ENCODE measurements at regions of chr7 and their contacts with region 1.

Region 1: GRCh38 chr7:51455948-51456347 is 139.3 kb upstream of the COBL start:
- DNase-seq: no peak
- H3K4me3 ChIP-seq: no peak overlapping the region
- H3K27ac ChIP-seq: no peak overlapping the region
- H3K4me1 ChIP-seq: peaks cover 0 to 14% (median 7%) of the 10 kb centered on the region in 4 experiments; a peak in 5 of 7 replicates
- H3K27me3 ChIP-seq: peaks cover 0 to 9% (median 6%) of the 10 kb centered on the region in 4 experiments; a peak in 2 of 7 replicates
- CTCF ChIP-seq: peak in 1 of 3 experiments; percentile 7; a peak in 2 of 4 replicates
- EP300 ChIP-seq: no peak
- POLR2A ChIP-seq: no peak
- RAD21 ChIP-seq: peak; percentile 25 to 38

Region 2: DNA sequence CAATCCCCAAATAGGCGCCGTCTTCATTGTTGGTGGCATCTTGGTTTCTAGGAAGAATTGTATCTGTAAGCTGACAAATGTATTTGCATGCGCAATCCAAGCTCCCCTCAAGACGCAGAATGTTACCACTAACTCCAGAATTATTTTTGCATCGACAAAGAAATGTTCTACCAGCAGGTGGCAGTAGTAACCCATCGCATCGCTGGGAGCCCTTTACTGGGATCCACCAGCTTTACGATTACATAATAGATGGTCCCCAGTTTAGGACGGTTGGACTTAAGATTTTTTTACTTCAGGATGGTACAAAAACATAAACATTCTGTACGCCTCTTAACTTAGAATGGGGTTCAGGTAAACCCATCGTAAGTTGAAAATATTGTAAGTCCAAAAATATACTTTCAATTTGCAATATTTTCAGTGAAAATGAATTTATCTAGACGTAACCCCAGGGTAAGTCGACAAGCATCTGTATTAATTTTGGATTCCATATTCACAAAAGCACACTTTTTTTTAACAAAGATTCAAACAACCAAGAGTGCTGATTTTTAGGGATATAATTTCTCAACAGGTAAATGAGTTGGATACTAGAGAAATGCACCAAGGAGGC is 25.4 kb before region 1 on chr7:
- CTCF ChIA-PET with region 1: interaction called, 17 read pairs
- POLR2A ChIA-PET with region 1: no interaction called
- DNase-seq: peak in 1 of 2 experiments; percentile 85
- H3K4me3 ChIP-seq: no peak overlapping the region
- H3K27ac ChIP-seq: no peak overlapping the region
- H3K4me1 ChIP-seq: no peaks in the 10 kb centered on the region; a peak in 2 of 7 replicates
- H3K27me3 ChIP-seq: no peaks in the 10 kb centered on the region; a peak in 1 of 7 replicates
- CTCF ChIP-seq: peak; percentile 43 to 83 (median 75)
- EP300 ChIP-seq: no peak
- POLR2A ChIP-seq: no peak
- RAD21 ChIP-seq: peak; percentile 98 to 99

Region 3: GRCh38 chr7:51444936-51445335 is 11.0 kb before region 1 on chr7:
- CTCF ChIA-PET with region 1: interaction called, 10 read pairs
- POLR2A ChIA-PET with region 1: interaction called, 4 read pairs
- DNase-seq: no peak
- H3K4me3 ChIP-seq: no peak overlapping the region
- H3K27ac ChIP-seq: no peak overlapping the region
- H3K4me1 ChIP-seq: peaks cover 0 to 10% (median 1%) of the 10 kb centered on the region in 4 experiments; a peak in 4 of 7 replicates
- H3K27me3 ChIP-seq: no peaks in the 10 kb centered on the region
- CTCF ChIP-seq: no peak
- EP300 ChIP-seq: no peak
- POLR2A ChIP-seq: no peak
- RAD21 ChIP-seq: no peak

Region 4: GRCh38 chr7:51471210-51471980 is 15.4 kb after region 1 on chr7:
- CTCF ChIA-PET with region 1: interaction called, 15 read pairs
- POLR2A ChIA-PET with region 1: interaction called, 3 read pairs
- DNase-seq: peak in 1 of 2 experiments; percentile 63
- H3K4me3 ChIP-seq: peak overlapping the region in 3 of 4 experiments; percentile 20 to 52 (median 24); a peak in 6 of 8 replicates
- H3K27ac ChIP-seq: no peak overlapping the region
- H3K4me1 ChIP-seq: peaks cover 0 to 11% (median 7%) of the 10 kb centered on the region in 4 experiments; a peak in 5 of 7 replicates
- H3K27me3 ChIP-seq: peaks cover 0 to 13% (median 10%) of the 10 kb centered on the region in 4 experiments; a peak in 4 of 7 replicates
- CTCF ChIP-seq: no peak
- EP300 ChIP-seq: no peak
- POLR2A ChIP-seq: no peak
- RAD21 ChIP-seq: 0 out of 4 replicates have a peak, but pooled peaks of 1 of the 2 experiments have one; percentile 11

Region 5: GRCh38 chr7:51517187-51517586 is 61.2 kb after region 1 on chr7:
- CTCF ChIA-PET with region 1: no interaction called
- POLR2A ChIA-PET with region 1: no interaction called
- DNase-seq: no peak
- H3K4me3 ChIP-seq: no peak overlapping the region
- H3K27ac ChIP-seq: no peak overlapping the region
- H3K4me1 ChIP-seq: no peaks in the 10 kb centered on the region; a peak in 1 of 7 replicates
- H3K27me3 ChIP-seq: no peaks in the 10 kb centered on the region
- CTCF ChIP-seq: no peak
- EP300 ChIP-seq: no peak
- POLR2A ChIP-seq: no peak
- RAD21 ChIP-seq: no peak